Transverse colon (tissue), 4 donors: ENCODE measurements at regions of chr12 and their contacts with region 1.

Region 1: DNA sequence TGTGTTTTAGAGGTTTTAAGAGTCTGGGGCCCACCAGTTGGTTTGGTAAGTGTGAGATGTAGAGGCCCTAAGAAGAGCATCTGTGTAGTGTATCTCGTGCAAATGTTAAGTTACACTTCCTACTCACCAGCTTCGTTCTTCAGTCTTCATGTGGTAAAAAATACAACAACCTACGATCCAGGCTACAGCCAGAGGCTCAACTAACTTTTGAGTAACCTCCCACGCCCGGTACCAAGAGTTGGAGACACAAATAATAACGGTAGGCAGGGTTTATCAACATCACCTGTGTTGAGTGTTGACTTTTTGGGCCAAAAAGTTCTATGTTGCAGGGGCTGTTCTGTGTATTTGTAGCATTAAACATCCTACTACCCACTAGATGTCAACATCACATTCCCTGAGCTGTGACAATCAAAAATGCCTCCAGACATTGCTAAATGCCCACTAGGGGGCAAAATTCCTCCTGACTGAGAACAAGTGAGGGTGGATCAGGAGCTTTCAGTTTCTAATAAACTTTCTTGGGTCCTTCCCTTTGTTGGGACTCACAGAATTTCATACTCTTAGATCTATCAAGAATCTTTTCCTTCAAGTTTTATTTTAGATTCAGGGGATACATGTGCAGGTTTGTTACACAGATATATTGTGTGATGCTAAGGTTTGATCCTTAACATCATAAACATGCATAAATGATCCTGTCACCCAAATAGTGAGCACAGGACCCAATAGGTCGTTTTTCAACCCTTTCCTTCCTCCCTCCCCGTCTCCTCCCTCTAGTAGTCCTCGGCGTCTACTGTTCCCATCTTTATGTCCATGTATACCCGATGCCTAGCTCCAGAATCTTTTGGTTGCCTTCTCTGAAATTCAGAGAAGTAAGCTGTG is 94.7 kb downstream of the SLC2A13 start:
- DNase-seq: peak; percentile 63
- H3K4me3 ChIP-seq: no peak overlapping the region
- H3K27ac ChIP-seq: peak overlapping the region; percentile 23 to 46 (median 28)
- H3K4me1 ChIP-seq: peaks cover 15 to 47% (median 34%) of the 10 kb centered on the region in 4 donors
- H3K27me3 ChIP-seq: no peaks in the 10 kb centered on the region
- CTCF ChIP-seq: peak in 4 of 5 experiments; percentile 40 to 87 (median 78)
- EP300 ChIP-seq: no peak
- POLR2A ChIP-seq: no peak

Region 2: DNA sequence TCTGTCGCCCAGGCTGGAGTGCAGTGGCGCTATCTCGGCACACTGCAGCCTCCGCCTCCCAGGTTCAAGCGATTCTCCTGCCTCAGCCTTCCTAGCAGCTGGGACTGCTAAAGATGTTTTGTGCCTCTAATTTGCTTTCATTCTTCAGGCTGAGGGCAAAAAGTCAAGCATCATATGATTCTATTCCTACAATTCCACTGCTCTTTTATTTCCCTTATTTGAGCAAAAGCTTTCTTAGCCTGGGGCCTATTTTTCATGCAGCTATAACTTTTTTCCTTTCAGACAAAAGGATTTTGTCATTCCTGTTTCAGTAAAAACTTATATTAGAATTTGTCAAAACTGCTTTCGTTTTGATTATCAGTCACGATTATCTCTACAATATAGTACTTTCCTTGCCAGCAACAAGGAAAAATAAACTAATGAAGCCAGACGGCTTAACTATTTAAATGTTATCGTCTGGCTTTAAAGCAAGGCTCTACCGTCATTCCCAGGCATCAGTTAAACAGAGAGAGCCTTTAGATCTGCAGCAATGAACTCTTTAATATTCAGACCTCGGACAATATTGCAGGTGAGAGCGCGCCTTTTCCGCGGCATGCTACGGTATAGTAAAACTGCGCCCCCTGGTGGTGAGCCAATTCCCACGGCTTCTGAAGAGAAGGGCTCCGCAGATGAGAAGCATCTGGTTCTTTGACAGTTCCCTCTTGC is 96.1 kb after region 1 on chr12:
- in situ Hi-C with region 1: loop called (anchors 5 to 10 kb)
- intact Hi-C with region 1: loop called (anchors 2 kb)
- DNase-seq: peak; percentile 93
- H3K4me3 ChIP-seq: peak overlapping the region in 3 of 4 donors; percentile 26 to 52 (median 31)
- H3K27ac ChIP-seq: peak overlapping the region; percentile 91 to 97 (median 94)
- H3K4me1 ChIP-seq: peaks cover 0 to 41% (median 28%) of the 10 kb centered on the region in 4 donors
- H3K27me3 ChIP-seq: no peaks in the 10 kb centered on the region
- CTCF ChIP-seq: peak; percentile 89 to 95 (median 93)
- EP300 ChIP-seq: no peak
- POLR2A ChIP-seq: no peak

Region 3: GRCh38 chr12:40117818-40118217 is 106.7 kb after region 1 on chr12:
- in situ Hi-C with region 1: loop called in 3 of 4 experiments (anchors 5 to 10 kb)
- intact Hi-C with region 1: no loop called
- DNase-seq: no peak
- H3K4me3 ChIP-seq: no peak overlapping the region
- H3K27ac ChIP-seq: no peak overlapping the region
- H3K4me1 ChIP-seq: no peaks in the 10 kb centered on the region
- H3K27me3 ChIP-seq: no peaks in the 10 kb centered on the region
- CTCF ChIP-seq: no peak
- EP300 ChIP-seq: no peak
- POLR2A ChIP-seq: no peak

Region 4: GRCh38 chr12:40181490-40181889 is 170.4 kb after region 1 on chr12:
- in situ Hi-C with region 1: no loop called
- intact Hi-C with region 1: no loop called
- DNase-seq: no peak
- H3K4me3 ChIP-seq: no peak overlapping the region
- H3K27ac ChIP-seq: no peak overlapping the region
- H3K4me1 ChIP-seq: no peaks in the 10 kb centered on the region
- H3K27me3 ChIP-seq: no peaks in the 10 kb centered on the region
- CTCF ChIP-seq: no peak
- EP300 ChIP-seq: no peak
- POLR2A ChIP-seq: no peak